HAP-1 (cell line): ENCODE measurements at regions of chr10 and their contacts with region 1.

Region 1: DNA sequence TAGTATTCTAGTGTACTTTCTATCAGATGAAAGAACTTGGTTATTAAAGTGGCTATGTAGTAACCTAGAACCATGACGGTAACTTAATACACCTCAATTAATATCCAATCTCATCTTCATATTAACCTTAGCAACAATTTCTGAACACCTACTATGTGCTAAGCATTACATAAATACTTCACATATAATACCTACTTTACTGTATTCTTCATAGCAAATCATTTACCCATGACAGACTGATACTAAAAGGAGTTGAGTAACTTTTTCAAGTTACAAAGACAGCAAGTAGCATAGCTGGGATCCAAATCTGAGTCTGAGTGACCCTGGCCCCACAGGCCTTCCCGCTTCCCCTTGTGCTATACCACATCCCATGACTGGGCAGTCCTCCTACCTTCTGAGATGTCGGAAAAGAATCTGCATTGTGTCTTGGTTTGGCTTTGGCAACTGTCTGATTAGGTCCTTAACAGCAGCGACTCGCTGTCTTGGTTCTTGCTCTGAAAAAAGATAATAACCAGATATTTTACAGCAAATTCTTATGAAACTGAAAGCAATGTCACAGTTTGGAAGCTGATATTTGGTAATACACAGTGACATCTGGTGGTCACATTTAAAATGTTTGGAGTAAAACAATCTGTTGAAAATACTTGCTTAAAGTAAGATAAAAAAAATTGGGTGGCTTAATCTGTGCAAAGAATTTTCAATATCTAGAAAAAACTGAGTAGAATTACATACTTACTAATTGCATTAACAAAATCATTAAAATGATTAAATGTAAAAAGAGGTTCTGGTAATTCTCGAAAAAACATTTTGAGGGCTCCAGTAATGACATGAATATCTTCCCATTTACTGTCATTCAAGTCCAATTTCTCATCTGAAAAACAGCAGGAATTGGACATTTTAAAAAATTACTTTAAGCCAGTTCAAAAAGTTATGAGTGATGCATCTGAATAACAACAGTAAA is 120.1 kb downstream of the ARHGAP12 start:
- DNase-seq: peak in 1 of 2 experiments; percentile 48
- H3K4me3 ChIP-seq: no peak overlapping the region
- H3K4me1 ChIP-seq: no peaks in the 10 kb centered on the region
- H3K27me3 ChIP-seq: no peaks in the 10 kb centered on the region

Region 2: GRCh38 chr10:30736685-30737232 is 1071.8 kb before region 1 on chr10:
- in situ Hi-C with region 1: loop called (anchors 25 kb)
- DNase-seq: no peak
- H3K4me3 ChIP-seq: no peak overlapping the region
- H3K4me1 ChIP-seq: no peaks in the 10 kb centered on the region
- H3K27me3 ChIP-seq: no peaks in the 10 kb centered on the region